ENCODE measurements at regions of chr12 and their contacts with region 1.

Region 1: DNA sequence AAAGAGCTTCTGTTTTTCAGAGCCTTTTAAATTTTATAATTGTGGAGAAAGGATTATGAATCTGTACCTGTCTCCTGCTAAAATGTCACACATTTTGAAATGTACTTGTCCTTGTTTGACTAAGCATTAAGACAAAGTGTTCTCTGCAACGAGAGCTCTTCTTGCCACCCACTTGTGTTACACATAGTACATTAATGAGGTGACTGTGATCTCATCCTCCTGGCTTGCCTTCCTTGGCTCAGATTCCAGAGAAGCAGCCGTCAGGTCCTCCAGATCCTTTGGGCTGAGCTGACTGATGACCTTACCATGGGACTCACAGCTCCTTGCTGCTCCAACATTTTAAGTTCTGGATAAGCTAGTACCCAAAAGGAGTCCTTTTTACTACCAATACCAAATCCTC is 81.4 kb downstream of the BBS10 start:
- DNase-seq: peak; percentile 92 to 96
- ATAC-seq: peak; percentile 99
- H3K4me3 ChIP-seq: peak overlapping the region in 1 of 4 donors; percentile 10
- H3K27ac ChIP-seq: peak overlapping the region; percentile 86 to 92 (median 89)
- H3K4me1 ChIP-seq: peaks cover 29 to 34% of the 10 kb centered on the region in 2 donors
- H3K27me3 ChIP-seq: no peaks in the 10 kb centered on the region
- CTCF ChIP-seq: no peak
- POLR2A ChIP-seq: peak; percentile 19 to 57

Region 2: DNA sequence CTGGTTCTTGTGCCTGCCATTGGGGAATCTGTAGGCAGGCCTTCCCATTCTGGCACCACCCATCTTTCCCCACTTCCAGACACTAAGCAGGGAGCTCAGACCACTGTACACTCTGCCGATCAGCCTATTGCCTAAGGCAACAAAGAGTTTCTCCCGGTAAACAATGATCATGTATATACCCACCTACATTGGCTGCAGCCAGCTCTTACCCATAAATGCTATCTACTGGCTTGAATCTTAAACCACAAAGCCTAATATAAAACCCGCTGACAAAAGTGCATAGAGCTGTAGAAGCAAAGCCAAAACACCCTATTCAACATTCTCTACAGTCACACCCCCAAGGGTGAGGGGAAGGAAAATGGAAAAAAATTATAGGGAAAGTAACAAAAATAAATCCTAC is 807.0 kb before region 1 on chr12:
- in situ Hi-C with region 1: no loop called
- intact Hi-C with region 1: no loop called
- DNase-seq: no peak
- ATAC-seq: no peak
- H3K4me3 ChIP-seq: no peak overlapping the region
- H3K27ac ChIP-seq: no peak overlapping the region
- H3K4me1 ChIP-seq: no peaks in the 10 kb centered on the region
- H3K27me3 ChIP-seq: no peaks in the 10 kb centered on the region
- CTCF ChIP-seq: no peak
- POLR2A ChIP-seq: no peak

Region 3: GRCh38 chr12:76348079-76348901 is 81.5 kb after region 1 on chr12 and contains the start of gene BBS10:
- in situ Hi-C with region 1: loop called in 1 of 4 experiments (anchors 5 kb)
- intact Hi-C with region 1: loop called (anchors 1 kb)
- DNase-seq: peak; percentile 83 to 91
- ATAC-seq: peak; percentile 91 to 96
- H3K4me3 ChIP-seq: peak within 1 kb of the TSS; percentile 68 to 91 (median 82)
- H3K27ac ChIP-seq: peak within 1 kb of the TSS; percentile 83 to 92 (median 88)
- H3K4me1 ChIP-seq: peaks cover 30 to 39% of the 10 kb centered on the region in 2 donors
- H3K27me3 ChIP-seq: no peaks in the 10 kb centered on the region
- CTCF ChIP-seq: peak in 4 of 5 experiments; percentile 34 to 56 (median 46)
- POLR2A ChIP-seq: peak; percentile 43 to 60
- total RNA-seq, gene BBS10: 9.0 to 17.5 (median 11.5) TPM

Region 4: DNA sequence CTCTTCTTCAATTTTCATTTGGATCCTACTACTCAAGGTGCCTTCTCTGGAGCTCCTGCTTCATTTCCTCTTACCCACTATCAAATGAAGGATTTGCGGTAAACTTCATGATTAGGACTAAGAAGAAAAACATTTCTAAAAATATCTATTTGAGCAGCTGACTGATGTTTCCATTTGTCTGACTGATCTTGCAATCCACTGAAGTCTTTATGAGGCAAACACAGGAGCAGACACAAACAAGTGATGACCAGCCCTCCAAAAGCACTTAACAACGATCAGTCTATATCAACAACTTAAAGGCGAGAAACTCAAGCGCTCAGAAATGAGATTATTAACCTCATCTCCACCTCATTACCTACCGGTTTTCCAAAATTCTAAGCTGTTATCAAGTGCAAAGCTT is 266.5 kb after region 1 on chr12:
- in situ Hi-C with region 1: no loop called
- intact Hi-C with region 1: loop called (anchors 5 kb)
- DNase-seq: no peak
- ATAC-seq: peak; percentile 32 to 68
- H3K4me3 ChIP-seq: peak overlapping the region in 1 of 4 donors; percentile 32
- H3K27ac ChIP-seq: peak overlapping the region; percentile 45 to 67 (median 53)
- H3K4me1 ChIP-seq: peaks cover 21 to 29% of the 10 kb centered on the region in 2 donors
- H3K27me3 ChIP-seq: no peaks in the 10 kb centered on the region
- CTCF ChIP-seq: no peak
- POLR2A ChIP-seq: peak; percentile 13 to 37

Region 5: DNA sequence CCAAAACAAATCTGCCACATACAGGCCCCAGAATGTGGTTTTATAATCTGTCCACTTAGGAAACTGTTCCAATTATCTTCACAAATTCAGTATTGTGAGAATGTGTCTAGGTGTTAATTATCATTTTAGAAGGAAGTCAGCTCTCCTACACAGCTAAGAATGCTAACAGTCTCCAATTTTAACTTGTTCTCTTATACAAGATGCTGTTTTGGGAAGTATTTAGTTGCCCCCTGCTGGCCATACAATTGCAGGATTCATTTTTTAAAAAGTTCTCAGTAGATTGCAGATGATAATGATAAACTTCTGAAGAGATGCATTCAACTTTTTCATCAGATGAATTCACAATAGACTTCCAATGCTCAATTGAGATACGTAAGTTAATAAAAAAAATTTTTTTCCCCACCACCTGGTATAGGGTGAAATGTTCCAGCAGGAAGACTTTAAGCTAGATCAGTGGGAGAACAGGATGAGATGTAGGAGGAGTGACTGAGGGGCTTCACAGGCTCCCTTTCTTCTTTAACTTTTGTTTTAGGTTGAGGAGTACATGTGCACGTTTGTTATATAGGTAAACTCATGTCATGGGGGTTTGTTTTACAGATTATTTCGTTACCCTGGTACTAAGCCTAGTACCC is 320.1 kb after region 1 on chr12:
- in situ Hi-C with region 1: no loop called
- intact Hi-C with region 1: loop called (anchors 5 kb)
- DNase-seq: peak in 1 of 2 donors; percentile 30
- ATAC-seq: no peak
- H3K4me3 ChIP-seq: no peak overlapping the region
- H3K27ac ChIP-seq: peak overlapping the region; percentile 88 to 97 (median 90)
- H3K4me1 ChIP-seq: peaks cover 15 to 16% of the 10 kb centered on the region in 2 donors
- H3K27me3 ChIP-seq: no peaks in the 10 kb centered on the region
- CTCF ChIP-seq: peak; percentile 55 to 76 (median 64)
- POLR2A ChIP-seq: no peak

Measured in gastrocnemius medialis (tissue), 4 donors.